Calu3 (cell line): ENCODE measurements at regions of chr7 and their contacts with region 1.

Region 1: GRCh38 chr7:106176414-106177299 is 64.5 kb upstream of the SYPL1 start:
- DNase-seq: peak; percentile 90
- H3K4me3 Mint-ChIP-seq: no peak overlapping the region
- H3K27ac Mint-ChIP-seq: no peak overlapping the region
- H3K4me1 Mint-ChIP-seq: peaks cover 33% of the 10 kb centered on the region
- H3K27me3 Mint-ChIP-seq: no peaks in the 10 kb centered on the region
- CTCF ChIP-seq: peak; percentile 92

Region 2: GRCh38 chr7:106223156-106223555 is 46.5 kb after region 1 on chr7:
- CTCF ChIA-PET with region 1: no interaction called
- intact Hi-C with region 1: no loop called
- DNase-seq: no peak
- H3K4me3 Mint-ChIP-seq: no peak overlapping the region
- H3K27ac Mint-ChIP-seq: no peak overlapping the region
- H3K4me1 Mint-ChIP-seq: no peaks in the 10 kb centered on the region
- H3K27me3 Mint-ChIP-seq: no peaks in the 10 kb centered on the region
- CTCF ChIP-seq: no peak

Region 3: DNA sequence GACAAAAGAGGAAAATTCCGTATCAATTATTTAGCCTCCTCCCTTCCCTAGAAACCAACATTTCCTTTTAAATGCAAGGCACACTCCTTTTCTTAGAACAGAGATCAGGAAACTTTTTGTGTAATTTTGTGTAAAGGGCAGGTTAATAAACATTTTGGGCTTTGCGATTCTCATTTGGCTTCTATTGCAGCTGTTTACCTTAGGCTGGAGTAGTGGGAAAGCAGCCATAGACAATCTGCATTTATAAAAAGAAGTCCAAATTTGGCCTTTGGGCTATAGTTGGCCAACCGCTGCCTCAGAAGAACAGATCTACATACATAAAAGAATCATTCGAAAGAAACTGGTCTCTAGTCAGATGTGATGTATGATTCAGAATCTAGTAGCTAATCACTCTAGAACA is 72.8 kb after region 1 on chr7:
- CTCF ChIA-PET with region 1: no interaction called
- intact Hi-C with region 1: no loop called
- DNase-seq: no peak
- H3K4me3 Mint-ChIP-seq: no peak overlapping the region
- H3K27ac Mint-ChIP-seq: no peak overlapping the region
- H3K4me1 Mint-ChIP-seq: peaks cover 13% of the 10 kb centered on the region
- H3K27me3 Mint-ChIP-seq: no peaks in the 10 kb centered on the region
- CTCF ChIP-seq: no peak

Region 4: GRCh38 chr7:106461993-106462859 is 285.6 kb after region 1 on chr7:
- CTCF ChIA-PET with region 1: interaction called, 57 read pairs
- intact Hi-C with region 1: loop called (anchors 1 kb)
- DNase-seq: peak; percentile 50
- H3K4me3 Mint-ChIP-seq: peak overlapping the region; percentile 3
- H3K27ac Mint-ChIP-seq: peak overlapping the region; percentile 59
- H3K4me1 Mint-ChIP-seq: peaks cover 51% of the 10 kb centered on the region
- H3K27me3 Mint-ChIP-seq: no peaks in the 10 kb centered on the region
- CTCF ChIP-seq: peak; percentile 40

Region 5: GRCh38 chr7:106520962-106521940 is 344.6 kb after region 1 on chr7:
- CTCF ChIA-PET with region 1: interaction called, 9 read pairs
- intact Hi-C with region 1: loop called (anchors 5 kb)
- DNase-seq: peak; percentile 19
- H3K4me3 Mint-ChIP-seq: no peak overlapping the region
- H3K27ac Mint-ChIP-seq: no peak overlapping the region
- H3K4me1 Mint-ChIP-seq: no peaks in the 10 kb centered on the region
- H3K27me3 Mint-ChIP-seq: peaks cover 14% of the 10 kb centered on the region
- CTCF ChIP-seq: no peak

Region 6: DNA sequence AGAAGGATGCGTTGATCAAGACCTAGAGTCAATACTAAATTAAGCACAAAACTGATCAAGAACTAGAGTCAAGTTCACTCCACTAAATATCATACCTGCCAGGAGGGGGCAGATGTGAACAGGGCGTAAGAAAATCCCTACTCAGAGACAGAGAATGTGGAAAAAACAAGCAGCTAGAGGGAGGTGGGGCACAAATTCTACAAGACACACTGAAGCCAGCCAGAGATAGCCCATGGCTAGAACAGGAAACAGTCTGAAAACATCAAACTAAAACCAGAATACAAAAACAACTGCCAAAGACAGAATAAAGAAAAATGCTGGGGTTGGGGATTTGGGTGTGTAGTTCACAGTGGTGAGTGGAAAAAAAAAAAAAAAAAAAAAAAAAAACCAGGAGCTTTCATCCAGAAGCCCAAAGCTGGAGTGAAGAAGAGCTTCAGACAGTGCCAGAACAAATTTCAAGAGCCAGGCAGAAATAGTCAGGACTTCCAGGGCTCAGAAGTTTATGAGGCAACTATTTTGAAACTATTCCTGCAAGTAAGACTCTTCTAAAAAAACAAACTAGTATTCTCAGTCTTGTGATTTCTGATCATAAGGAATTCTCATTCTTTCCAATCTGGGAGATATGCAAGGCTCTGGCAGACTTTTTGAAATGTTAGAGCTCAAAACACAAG is 366.0 kb after region 1 on chr7:
- CTCF ChIA-PET with region 1: interaction called, 10 read pairs
- intact Hi-C with region 1: loop called (anchors 5 kb)
- DNase-seq: peak; percentile 79
- H3K4me3 Mint-ChIP-seq: no peak overlapping the region
- H3K27ac Mint-ChIP-seq: peak overlapping the region; percentile 40
- H3K4me1 Mint-ChIP-seq: peaks cover 19% of the 10 kb centered on the region
- H3K27me3 Mint-ChIP-seq: no peaks in the 10 kb centered on the region
- CTCF ChIP-seq: peak; percentile 60

Region 7: DNA sequence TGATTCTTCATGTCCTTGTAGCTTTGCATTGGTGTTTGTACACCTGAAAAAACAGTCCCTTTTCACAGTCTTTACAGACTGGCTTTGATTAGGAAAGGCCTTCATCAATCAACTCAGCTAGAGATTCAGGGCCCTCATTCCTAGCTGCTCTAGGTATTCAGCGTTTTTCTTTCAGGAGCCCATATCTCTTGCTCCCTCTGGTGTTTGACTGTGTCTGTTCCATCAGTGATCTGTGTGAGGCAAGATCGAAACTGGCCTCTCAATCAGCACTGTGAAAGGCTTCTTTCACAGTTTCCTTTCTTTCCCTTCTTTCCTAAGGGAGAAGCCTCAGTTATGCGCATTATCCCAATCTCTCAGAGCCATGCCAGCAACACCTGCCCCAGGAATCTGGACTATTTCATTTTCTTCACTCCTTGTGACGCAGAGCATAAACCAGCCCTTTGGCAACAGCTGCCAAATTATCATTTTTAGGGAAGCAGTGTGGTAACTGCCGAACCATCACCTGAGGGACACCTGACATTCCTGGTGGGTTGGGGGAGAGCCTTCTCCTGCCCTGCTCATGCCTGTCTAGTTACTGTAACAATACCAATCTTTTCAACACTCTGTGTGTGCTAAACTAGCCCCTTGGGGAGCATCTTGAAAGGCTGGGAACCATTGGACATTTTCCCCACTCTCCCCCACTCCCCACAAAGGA is 560.0 kb after region 1 on chr7:
- CTCF ChIA-PET with region 1: interaction called, 26 read pairs
- intact Hi-C with region 1: loop called (anchors 1 kb)
- DNase-seq: peak; percentile 62
- H3K4me3 Mint-ChIP-seq: peak overlapping the region; percentile 40
- H3K27ac Mint-ChIP-seq: peak overlapping the region; percentile 48
- H3K4me1 Mint-ChIP-seq: peaks cover 16% of the 10 kb centered on the region
- H3K27me3 Mint-ChIP-seq: no peaks in the 10 kb centered on the region
- CTCF ChIP-seq: peak; percentile 30

Region 8: GRCh38 chr7:107150375-107151073 is 973.9 kb after region 1 on chr7:
- CTCF ChIA-PET with region 1: no interaction called
- intact Hi-C with region 1: loop called (anchors 10 kb)
- DNase-seq: peak; percentile 50
- H3K4me3 Mint-ChIP-seq: no peak overlapping the region
- H3K27ac Mint-ChIP-seq: no peak overlapping the region
- H3K4me1 Mint-ChIP-seq: peaks cover 9% of the 10 kb centered on the region
- H3K27me3 Mint-ChIP-seq: no peaks in the 10 kb centered on the region
- CTCF ChIP-seq: peak; percentile 22